HEK293T (cell line): ENCODE measurements at regions of chr9 and their contacts with region 1.

Region 1: DNA sequence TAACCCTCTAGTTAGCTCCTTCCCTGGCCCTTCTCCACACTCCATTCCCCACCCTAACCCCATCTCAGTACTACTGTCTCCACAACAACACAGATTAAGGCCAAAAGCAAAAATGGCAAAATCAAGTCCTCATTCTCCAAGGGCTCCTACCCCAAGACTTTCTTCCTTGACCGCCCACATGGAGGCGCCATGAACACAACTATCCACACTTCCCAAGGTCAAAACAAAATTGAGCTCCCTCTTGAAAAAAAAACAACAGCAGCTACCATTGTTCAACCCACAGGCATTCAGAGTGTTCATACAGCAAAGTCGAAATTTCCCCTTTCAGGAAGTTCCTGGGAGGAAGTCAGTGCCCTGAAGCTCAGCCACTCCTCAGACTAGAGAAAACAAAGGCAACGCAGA is 54.4 kb downstream of the GNAQ start:
- DNase-seq: peak; percentile 61

Region 2: GRCh38 chr9:78001946-78002731 is 24.9 kb after region 1 on chr9:
- CTCF ChIA-PET with region 1: no interaction called
- POLR2A ChIA-PET with region 1: no interaction called
- DNase-seq: no peak

Region 3: GRCh38 chr9:78035383-78035993 is 58.3 kb after region 1 on chr9:
- CTCF ChIA-PET with region 1: interaction called, 17 read pairs
- POLR2A ChIA-PET with region 1: interaction called, 3 read pairs
- DNase-seq: peak; percentile 58